PC-9 (cell line): ENCODE measurements at regions of chr2 and their contacts with region 1.

Region 1: GRCh38 chr2:223944703-223945531 is at the start of gene WDFY1:
- DNase-seq: peak; percentile 77 to 94
- H3K4me3 ChIP-seq: peak within 1 kb of the TSS; percentile 74
- H3K27ac ChIP-seq: 0 out of 2 replicates have a peak within 1 kb of the TSS, but pooled peaks have one; percentile 1
- H3K4me1 ChIP-seq: peaks cover 42% of the 10 kb centered on the region
- H3K27me3 ChIP-seq: no peaks in the 10 kb centered on the region
- CTCF ChIP-seq: no peak
- total RNA-seq, gene WDFY1: 81.9 and 84.4 TPM in 2 replicates

Region 2: DNA sequence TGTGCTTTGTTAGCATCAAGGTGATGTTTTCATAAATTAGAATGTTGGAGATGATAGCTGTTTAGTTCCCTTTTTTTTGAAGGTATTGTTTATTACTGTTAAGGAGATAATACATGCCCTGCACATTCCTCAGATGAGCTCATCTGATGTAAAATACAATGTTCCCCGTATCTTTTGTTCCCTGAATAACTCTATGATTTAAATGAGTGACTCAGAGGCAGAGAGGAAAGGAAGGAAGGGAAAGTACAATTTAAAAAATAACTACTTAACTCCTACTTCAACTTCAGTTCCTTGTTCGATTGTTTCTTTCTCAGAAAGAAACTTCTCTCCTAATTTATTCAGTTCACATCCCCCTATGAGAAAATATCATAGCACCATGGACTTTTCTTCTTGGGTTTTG is 684.2 kb before region 1 on chr2:
- CTCF ChIA-PET with region 1: no interaction called
- POLR2A ChIA-PET with region 1: no interaction called
- intact Hi-C with region 1: no loop called
- DNase-seq: no peak
- H3K4me3 ChIP-seq: no peak overlapping the region
- H3K27ac ChIP-seq: no peak overlapping the region
- H3K4me1 ChIP-seq: peaks cover 11% of the 10 kb centered on the region
- H3K27me3 ChIP-seq: no peaks in the 10 kb centered on the region
- CTCF ChIP-seq: no peak

Region 3: GRCh38 chr2:223619486-223620129 is 325.3 kb before region 1 on chr2:
- CTCF ChIA-PET with region 1: no interaction called
- POLR2A ChIA-PET with region 1: no interaction called
- intact Hi-C with region 1: loop called (anchors 5 kb)
- DNase-seq: peak; percentile 81 to 86
- H3K4me3 ChIP-seq: no peak overlapping the region
- H3K27ac ChIP-seq: no peak overlapping the region
- H3K4me1 ChIP-seq: peaks cover 13% of the 10 kb centered on the region
- H3K27me3 ChIP-seq: no peaks in the 10 kb centered on the region
- CTCF ChIP-seq: no peak

Region 4: DNA sequence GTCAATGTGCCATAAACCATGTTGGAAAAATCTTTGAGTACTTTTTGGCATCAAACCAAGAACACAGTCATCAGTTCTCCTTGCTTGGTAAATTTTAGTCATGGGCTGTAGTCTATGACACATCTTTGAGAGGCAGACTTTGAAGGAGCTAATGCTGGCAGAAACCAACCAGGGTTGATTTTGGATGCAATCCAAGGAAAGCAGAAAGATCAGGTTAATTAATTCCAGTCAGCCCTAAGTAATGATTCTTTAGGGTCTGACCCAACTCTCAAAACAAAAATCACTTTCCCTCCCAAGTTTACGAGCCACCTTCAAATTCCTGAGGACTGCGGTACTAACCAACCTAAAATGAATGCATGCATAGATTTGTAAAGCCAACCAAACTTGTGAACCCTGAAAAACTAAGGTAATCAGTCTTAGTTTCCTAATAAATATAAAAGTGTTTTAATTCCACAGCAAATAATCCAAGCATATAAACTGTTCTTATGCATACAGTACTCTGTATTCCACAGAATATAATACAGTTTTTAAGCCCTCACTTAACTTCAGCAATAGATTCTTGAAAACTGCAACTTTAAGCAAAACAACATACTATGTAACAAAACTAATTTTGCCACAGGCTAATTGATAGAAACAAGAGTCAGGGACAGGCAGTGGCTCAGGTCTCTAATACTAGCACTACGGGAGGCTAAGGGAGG is 129.6 kb before region 1 on chr2:
- CTCF ChIA-PET with region 1: no interaction called
- POLR2A ChIA-PET with region 1: no interaction called
- intact Hi-C with region 1: loop called (anchors 1 kb)
- DNase-seq: peak; percentile 75 to 100
- H3K4me3 ChIP-seq: peak overlapping the region; percentile 0; the same call in 1 of the 2 replicates
- H3K27ac ChIP-seq: peak overlapping the region; percentile 79
- H3K4me1 ChIP-seq: peaks cover 62% of the 10 kb centered on the region
- H3K27me3 ChIP-seq: no peaks in the 10 kb centered on the region
- CTCF ChIP-seq: no peak

Region 5: GRCh38 chr2:223846525-223846924 is 98.4 kb before region 1 on chr2:
- CTCF ChIA-PET with region 1: interaction called, 8 read pairs
- POLR2A ChIA-PET with region 1: interaction called, 10 read pairs
- intact Hi-C with region 1: no loop called
- DNase-seq: peak; percentile 33 to 93
- H3K4me3 ChIP-seq: no peak overlapping the region
- H3K27ac ChIP-seq: peak overlapping the region; percentile 84
- H3K4me1 ChIP-seq: peaks cover 14% of the 10 kb centered on the region
- H3K27me3 ChIP-seq: no peaks in the 10 kb centered on the region
- CTCF ChIP-seq: no peak

Region 6: DNA sequence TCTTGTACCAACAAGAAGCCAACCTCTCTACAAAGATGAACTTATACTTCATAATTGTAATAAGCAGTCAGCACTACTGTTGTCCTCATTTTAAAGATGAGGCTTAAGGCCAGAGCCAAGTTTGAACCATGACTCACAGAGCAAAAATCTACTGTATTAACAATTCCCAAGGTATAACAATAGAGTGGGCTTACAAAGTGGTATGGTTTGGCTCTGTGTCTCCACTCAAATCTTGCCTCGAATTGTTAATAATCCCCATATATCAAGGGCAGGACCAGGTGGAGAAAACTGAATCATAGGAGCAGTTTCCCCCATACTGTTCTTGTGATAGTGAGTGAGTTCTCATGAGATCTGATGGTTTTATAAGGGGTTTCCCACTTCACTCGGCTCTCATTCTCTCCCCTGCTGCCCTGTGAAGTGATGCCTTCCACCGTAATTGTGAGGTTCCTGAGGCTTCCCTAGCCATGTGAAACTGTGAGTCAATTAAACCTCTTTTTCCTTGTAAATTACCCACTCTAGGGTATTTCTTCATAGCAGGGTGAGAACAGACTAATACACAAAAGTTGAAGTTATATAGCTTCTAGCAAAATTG is 31.8 kb after region 1 on chr2:
- CTCF ChIA-PET with region 1: no interaction called
- POLR2A ChIA-PET with region 1: no interaction called
- intact Hi-C with region 1: no loop called
- DNase-seq: no peak
- H3K4me3 ChIP-seq: no peak overlapping the region
- H3K27ac ChIP-seq: no peak overlapping the region
- H3K4me1 ChIP-seq: no peaks in the 10 kb centered on the region
- H3K27me3 ChIP-seq: no peaks in the 10 kb centered on the region
- CTCF ChIP-seq: no peak